ENCODE measurements at regions of chr20 and their contacts with region 1.

Region 1: DNA sequence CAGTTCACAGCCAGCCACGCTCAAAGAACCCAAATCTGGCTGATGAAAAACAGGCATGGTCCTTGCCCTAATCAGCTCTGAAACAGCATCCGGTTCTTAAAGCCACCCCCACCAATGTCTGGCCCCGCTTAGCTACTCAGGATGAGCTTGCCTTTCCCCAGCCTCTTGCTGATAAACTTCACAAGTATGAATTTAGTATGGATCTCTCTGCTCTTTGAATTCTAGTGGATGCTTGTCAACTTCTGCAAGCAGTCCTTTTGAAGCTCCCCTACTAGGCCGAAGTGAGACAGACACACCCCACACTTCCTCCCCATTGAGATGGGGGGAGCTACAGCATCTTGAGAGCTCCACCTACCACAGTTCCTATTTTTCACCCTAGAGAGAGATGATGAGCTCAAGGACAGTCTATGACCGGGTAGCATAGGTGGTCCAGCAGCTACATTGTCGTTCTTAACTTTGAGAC is 36.7 kb downstream of the EBF4 start:
- DNase-seq: no peak
- ATAC-seq: peak; percentile 95
- H3K4me3 Mint-ChIP-seq: peak overlapping the region; percentile 52
- H3K27ac Mint-ChIP-seq: peak overlapping the region; percentile 87
- H3K4me1 Mint-ChIP-seq: peaks cover 7% of the 10 kb centered on the region
- H3K27me3 Mint-ChIP-seq: peaks cover 8% of the 10 kb centered on the region

Region 2: GRCh38 chr20:2741463-2741862 is 12.2 kb after region 1 on chr20:
- POLR2A ChIA-PET with region 1: interaction called, 23 read pairs
- DNase-seq: no peak
- ATAC-seq: peak; percentile 81
- H3K4me3 Mint-ChIP-seq: peak overlapping the region; percentile 59
- H3K27ac Mint-ChIP-seq: peak overlapping the region; percentile 75
- H3K4me1 Mint-ChIP-seq: peaks cover 27% of the 10 kb centered on the region
- H3K27me3 Mint-ChIP-seq: peaks cover under 1% of the 10 kb centered on the region

Region 3: GRCh38 chr20:2780948-2781347 is 51.7 kb after region 1 on chr20:
- POLR2A ChIA-PET with region 1: no interaction called
- DNase-seq: no peak
- ATAC-seq: no peak
- H3K4me3 Mint-ChIP-seq: no peak overlapping the region
- H3K27ac Mint-ChIP-seq: no peak overlapping the region
- H3K4me1 Mint-ChIP-seq: no peaks in the 10 kb centered on the region
- H3K27me3 Mint-ChIP-seq: peaks cover 32% of the 10 kb centered on the region

Measured in activated naive CD8-positive, alpha-beta T cell treated with anti-CD3 and anti-CD28 coated beads, Interleukin-2, amount 10 ng/mL, durations not matched to agents 7 days and 5 days (primary cell).